ENCODE measurements at regions of chr1 and their contacts with region 1.

Region 1: DNA sequence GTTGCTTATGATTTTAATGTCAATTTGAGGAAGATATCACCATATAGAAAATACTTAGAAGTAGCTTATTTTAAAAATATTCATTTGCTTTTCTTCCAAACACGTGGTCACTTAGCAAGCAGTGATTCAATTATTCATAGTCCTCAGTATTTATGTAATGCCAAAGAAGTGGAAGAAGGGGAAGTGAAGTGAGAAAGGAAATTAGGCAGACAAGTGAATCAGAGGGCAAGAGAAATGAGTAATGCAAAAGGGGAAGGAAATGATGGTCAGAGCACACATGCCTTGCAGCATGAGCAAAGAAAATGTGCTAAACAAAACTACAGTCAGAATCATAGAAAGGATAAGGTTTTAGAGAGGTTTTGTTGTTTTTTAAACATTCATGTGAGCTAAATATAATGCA is 31.8 kb downstream of the SDCCAG8 start:
- DNase-seq: no peak
- H3K4me3 ChIP-seq: no peak overlapping the region
- H3K27ac ChIP-seq: no peak overlapping the region
- H3K4me1 ChIP-seq: no peaks in the 10 kb centered on the region
- H3K27me3 ChIP-seq: no peaks in the 10 kb centered on the region
- CTCF ChIP-seq: no peak
- POLR2A ChIP-seq: no peak

Region 2: GRCh38 chr1:243672539-243673074 is 385.0 kb after region 1 on chr1:
- intact Hi-C with region 1: no loop called
- DNase-seq: no peak
- H3K4me3 ChIP-seq: no peak overlapping the region
- H3K27ac ChIP-seq: no peak overlapping the region
- H3K4me1 ChIP-seq: no peaks in the 10 kb centered on the region
- H3K27me3 ChIP-seq: no peaks in the 10 kb centered on the region
- CTCF ChIP-seq: no peak
- POLR2A ChIP-seq: no peak

Region 3: DNA sequence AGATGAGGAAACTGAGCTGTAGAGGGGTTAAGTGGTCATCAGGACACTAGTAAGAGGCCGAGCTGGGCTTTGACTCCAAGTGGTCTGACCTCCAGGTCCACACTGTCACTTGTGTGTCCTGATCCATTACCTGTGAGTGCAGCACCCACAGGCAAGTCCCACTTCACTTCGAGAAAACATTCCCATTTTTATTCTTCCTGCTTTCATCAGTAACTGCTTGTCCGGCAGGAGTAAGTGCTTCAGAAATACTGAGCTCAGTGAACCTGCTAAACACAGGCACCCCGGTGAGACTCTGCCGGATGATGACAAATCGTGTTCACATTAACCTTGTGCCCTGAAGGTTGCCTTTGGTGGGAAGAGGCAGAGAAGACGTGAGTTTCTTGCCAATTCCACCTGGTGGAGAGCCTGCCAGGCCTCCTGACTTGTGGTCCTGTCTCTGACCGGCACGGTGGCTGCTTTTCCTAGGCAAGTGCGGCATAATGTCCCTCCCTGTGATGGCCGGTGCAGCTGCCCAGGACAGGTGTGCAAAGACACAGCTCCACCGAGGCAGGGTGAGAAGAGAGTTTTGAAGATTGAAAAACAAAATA is 792.8 kb after region 1 on chr1:
- intact Hi-C with region 1: loop called (anchors 5 kb)
- DNase-seq: no peak
- H3K4me3 ChIP-seq: no peak overlapping the region
- H3K27ac ChIP-seq: no peak overlapping the region
- H3K4me1 ChIP-seq: no peaks in the 10 kb centered on the region
- H3K27me3 ChIP-seq: no peaks in the 10 kb centered on the region
- CTCF ChIP-seq: no peak
- POLR2A ChIP-seq: no peak